Psoas muscle (tissue), 8 donors: ENCODE measurements at regions of chr11 and their contacts with region 1.

Region 1: DNA sequence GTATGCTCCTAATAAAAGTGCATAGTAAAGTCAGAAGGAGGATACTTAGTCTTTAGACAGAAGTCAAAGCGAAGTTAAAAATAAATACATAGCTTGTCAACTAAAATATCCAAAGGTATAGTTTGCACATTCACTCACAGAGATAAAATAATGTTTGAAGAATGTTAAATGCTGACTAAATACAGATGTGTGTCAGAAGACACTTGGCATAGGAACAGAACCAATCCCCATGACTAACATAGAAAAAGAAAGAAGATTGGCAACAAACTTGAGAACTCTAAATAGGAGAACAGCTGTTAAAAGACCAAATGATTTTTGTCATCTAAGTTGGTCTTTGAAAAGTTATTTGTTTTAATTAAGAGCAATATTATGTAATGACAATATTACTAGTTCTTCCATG is 1172.1 kb upstream of the RAG2 start:
- DNase-seq: no peak
- ATAC-seq: no peak
- H3K4me3 ChIP-seq: no peak overlapping the region
- H3K27ac ChIP-seq: no peak overlapping the region
- H3K4me1 ChIP-seq: no peaks in the 10 kb centered on the region
- H3K27me3 ChIP-seq: no peaks in the 10 kb centered on the region
- CTCF ChIP-seq: no peak

Region 2: GRCh38 chr11:37946155-37946766 is 176.1 kb after region 1 on chr11:
- intact Hi-C with region 1: no loop called
- DNase-seq: no peak
- ATAC-seq: no peak
- H3K4me3 ChIP-seq: no peak overlapping the region
- H3K27ac ChIP-seq: no peak overlapping the region
- H3K4me1 ChIP-seq: no peaks in the 10 kb centered on the region
- H3K27me3 ChIP-seq: no peaks in the 10 kb centered on the region
- CTCF ChIP-seq: peak; percentile 30

Region 3: GRCh38 chr11:38163526-38163925 is 393.4 kb after region 1 on chr11:
- intact Hi-C with region 1: loop called in 1 of 2 experiments (anchors 5 kb)
- DNase-seq: no peak
- ATAC-seq: no peak
- H3K4me3 ChIP-seq: no peak overlapping the region
- H3K27ac ChIP-seq: no peak overlapping the region
- H3K4me1 ChIP-seq: no peaks in the 10 kb centered on the region
- H3K27me3 ChIP-seq: no peaks in the 10 kb centered on the region
- CTCF ChIP-seq: no peak